BJ (cell line): ENCODE measurements at regions of chr16 and their contacts with region 1.

Region 1: DNA sequence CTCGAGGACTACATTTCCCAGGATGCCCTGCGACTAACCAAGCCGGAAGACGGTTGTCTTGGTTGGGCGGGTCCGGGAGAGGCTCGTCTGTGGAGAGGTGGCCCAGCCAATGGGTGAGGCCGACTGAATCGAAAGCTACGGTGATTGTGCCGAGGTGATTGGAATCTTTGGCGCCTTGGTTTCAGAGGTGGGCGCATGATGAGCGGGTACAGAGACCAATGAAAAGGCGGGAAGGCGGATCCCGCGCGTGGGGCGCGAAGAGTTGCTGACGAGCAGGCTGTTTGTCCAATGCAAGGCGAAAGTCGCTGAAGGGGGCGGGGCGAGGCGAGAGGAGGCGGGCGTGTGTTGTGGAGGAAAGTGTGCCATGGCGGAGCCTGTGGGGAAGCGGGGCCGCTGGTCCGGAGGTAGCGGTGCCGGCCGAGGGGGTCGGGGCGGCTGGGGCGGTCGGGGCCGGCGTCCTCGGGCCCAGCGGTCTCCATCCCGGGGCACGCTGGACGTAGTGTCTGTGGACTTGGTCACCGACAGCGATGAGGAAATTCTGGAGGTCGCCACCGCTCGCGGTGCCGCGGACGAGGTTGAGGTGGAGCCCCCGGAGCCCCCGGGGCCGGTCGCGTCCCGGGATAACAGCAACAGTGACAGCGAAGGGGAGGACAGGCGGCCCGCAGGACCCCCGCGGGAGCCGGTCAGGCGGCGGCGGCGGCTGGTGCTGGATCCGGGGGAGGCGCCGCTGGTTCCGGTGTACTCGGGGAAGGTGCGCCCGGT is at the start of gene NFATC2IP:
- DNase-seq: peak; percentile 99
- H3K4me3 ChIP-seq: peak within 1 kb of the TSS; percentile 88
- H3K27me3 ChIP-seq: no peaks in the 10 kb centered on the region
- CTCF ChIP-seq: no peak
- polyA plus RNA-seq, gene NFATC2IP: 23.6 and 30.7 TPM in 2 replicates

Region 2: DNA sequence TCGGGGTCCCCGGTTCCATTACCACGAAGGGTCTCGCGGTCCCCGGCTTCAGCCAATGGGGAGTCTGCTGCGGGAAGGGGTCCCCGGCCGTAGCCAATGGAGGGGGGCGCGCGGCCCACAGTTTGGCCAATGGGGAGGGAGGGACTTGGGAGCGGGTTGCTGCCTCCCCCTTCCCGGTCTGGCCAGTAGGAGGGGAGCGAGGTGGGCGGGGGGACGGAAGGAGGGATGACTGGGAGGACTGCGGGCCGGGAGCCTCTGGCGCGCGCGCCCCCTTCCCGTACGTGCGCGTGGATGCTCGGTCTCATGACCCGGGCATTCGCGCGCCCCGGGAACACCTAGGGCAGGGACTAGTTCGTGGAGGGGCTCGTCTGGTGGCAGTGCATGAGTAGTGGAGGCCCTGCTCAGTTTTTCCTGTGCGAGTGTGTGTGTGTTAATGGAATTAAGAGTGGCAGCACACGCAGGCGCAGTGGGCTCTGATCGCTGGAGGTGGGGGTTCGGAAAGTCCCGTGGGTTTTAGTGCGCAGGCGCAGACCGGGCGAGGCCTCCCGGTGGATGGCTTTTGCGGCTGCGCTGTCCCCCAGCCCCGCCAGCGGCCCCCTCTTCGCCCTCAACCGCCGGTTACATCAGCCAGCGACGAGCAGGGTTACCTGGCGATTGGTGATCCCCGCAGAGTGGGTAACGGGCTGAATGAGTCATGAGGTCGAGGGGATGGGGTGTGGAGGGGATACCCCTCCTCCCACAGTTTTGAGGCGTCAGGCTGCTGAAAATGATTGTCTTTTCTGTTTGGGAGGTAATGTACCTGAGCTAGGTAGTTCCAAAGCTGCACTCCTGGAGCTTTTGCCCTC is 126.7 kb before region 1 on chr16:
- CTCF ChIA-PET with region 1: interaction called, 12 read pairs
- POLR2A ChIA-PET with region 1: no interaction called
- DNase-seq: peak; percentile 82
- H3K4me3 ChIP-seq: peak overlapping the region; percentile 82
- H3K27me3 ChIP-seq: no peaks in the 10 kb centered on the region
- CTCF ChIP-seq: peak; percentile 37; the same call in 1 of the 2 replicates

Region 3: DNA sequence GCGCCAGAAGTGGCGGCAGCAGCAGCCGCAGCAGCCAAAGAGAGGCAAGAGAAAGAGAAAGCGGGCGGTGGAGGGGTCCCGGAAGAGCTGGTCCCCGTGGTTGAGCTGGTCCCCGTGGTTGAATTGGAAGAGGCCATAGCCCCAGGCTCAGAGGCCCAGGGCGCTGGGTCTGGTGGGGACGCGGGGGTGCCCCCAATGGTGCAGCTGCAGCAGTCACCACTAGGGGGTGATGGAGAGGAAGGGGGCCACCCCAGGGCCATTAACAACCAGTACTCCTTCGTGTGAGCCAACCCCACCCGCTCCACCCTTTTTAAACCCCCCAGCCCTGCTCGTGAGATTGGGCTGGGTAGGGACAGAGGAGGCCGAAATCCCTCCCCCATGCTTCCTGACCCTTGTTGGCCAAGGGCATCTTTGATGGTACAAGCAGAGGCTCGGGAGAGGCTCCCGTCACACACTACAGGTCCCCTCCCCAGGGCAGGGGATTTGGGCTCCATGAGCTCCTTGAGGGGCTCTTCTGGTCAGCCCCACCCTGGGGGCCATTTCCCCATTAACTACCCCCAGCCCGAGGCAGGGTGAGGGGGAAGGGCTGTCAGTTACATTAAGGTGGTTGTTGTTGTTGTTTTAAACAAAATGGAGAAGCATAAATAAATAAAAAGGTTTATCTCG is 77.2 kb before region 1 on chr16:
- CTCF ChIA-PET with region 1: interaction called, 24 read pairs
- POLR2A ChIA-PET with region 1: no interaction called
- DNase-seq: no peak
- H3K4me3 ChIP-seq: no peak overlapping the region
- H3K27me3 ChIP-seq: no peaks in the 10 kb centered on the region
- CTCF ChIP-seq: peak; percentile 77

Region 4: GRCh38 chr16:28923231-28923701 is 27.6 kb before region 1 on chr16:
- CTCF ChIA-PET with region 1: no interaction called
- POLR2A ChIA-PET with region 1: no interaction called
- DNase-seq: no peak
- H3K4me3 ChIP-seq: no peak overlapping the region
- H3K27me3 ChIP-seq: no peaks in the 10 kb centered on the region
- CTCF ChIP-seq: no peak

Region 5: DNA sequence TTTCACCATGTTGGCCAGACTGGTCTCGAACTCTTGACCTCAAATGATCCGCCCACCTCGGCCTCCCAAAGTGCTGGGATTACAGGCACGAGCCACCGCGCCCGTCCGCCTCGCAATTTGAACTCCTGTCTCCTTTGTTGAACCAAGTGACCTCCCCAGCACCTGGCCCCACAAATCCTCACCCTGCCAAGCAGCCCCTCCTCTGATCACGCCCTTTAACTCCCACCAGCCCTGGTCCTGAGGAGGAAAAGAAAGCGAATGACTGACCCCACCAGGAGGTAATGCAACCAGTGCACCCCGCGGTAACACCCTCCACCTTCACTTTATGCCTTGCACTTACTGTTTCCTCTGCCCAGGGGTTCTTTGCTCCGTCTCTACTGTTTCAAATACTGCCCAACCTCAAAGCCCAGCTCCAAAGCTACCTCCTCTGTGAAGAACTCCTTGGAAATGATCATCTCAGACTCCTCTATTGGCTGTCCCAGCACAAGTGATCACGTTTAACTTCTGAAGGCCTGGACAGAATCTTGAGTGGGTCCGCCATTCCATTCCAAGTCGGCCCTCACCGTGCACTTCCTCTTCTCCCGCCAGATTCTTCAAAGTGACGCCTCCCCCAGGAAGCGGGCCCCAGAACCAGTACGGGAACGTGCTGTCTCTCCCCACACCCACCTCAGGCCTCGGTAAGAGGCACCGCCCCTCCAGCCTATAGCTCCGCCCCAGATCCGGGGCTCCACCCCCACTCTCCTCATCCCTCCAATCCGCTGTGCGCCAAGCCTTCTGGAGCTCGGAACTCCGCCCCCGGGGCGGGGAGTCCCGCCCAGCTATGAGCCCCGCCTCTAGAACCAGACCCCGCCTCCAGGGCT is 14.7 kb before region 1 on chr16:
- CTCF ChIA-PET with region 1: interaction called, 20 read pairs
- POLR2A ChIA-PET with region 1: interaction called, 7 read pairs
- DNase-seq: peak; percentile 28
- H3K4me3 ChIP-seq: no peak overlapping the region
- H3K27me3 ChIP-seq: no peaks in the 10 kb centered on the region
- CTCF ChIP-seq: no peak

Region 6: GRCh38 chr16:28990375-28991040 is 39.7 kb after region 1 on chr16:
- CTCF ChIA-PET with region 1: no interaction called
- POLR2A ChIA-PET with region 1: no interaction called
- DNase-seq: no peak
- H3K4me3 ChIP-seq: no peak overlapping the region
- H3K27me3 ChIP-seq: no peaks in the 10 kb centered on the region
- CTCF ChIP-seq: no peak